Mammary epithelial cell (primary cell): ENCODE measurements at regions of chr3 and their contacts with region 1.

Region 1: GRCh38 chr3:189786479-189787064 is 155.4 kb downstream of the TP63 start:
- DNase-seq: no peak
- H3K4me3 ChIP-seq: no peak overlapping the region
- H3K27ac ChIP-seq: no peak overlapping the region
- H3K4me1 ChIP-seq: peaks cover 12% of the 10 kb centered on the region
- H3K27me3 ChIP-seq: no peaks in the 10 kb centered on the region
- CTCF ChIP-seq: peak in 1 of 2 donors; percentile 32

Region 2: GRCh38 chr3:189355481-189356201 is 430.9 kb before region 1 on chr3:
- CTCF ChIA-PET with region 1: no interaction called
- dilution Hi-C with region 1: no loop called
- in situ Hi-C with region 1: no loop called
- intact Hi-C with region 1: loop called (anchors 5 kb)
- DNase-seq: peak; percentile 91
- H3K4me3 ChIP-seq: no peak overlapping the region
- H3K27ac ChIP-seq: peak overlapping the region; percentile 88
- H3K4me1 ChIP-seq: peaks cover 36% of the 10 kb centered on the region
- H3K27me3 ChIP-seq: no peaks in the 10 kb centered on the region
- CTCF ChIP-seq: no peak

Region 3: GRCh38 chr3:189588070-189588820 is 198.3 kb before region 1 on chr3:
- CTCF ChIA-PET with region 1: no interaction called
- dilution Hi-C with region 1: no loop called
- in situ Hi-C with region 1: no loop called
- intact Hi-C with region 1: loop called (anchors 5 kb)
- DNase-seq: peak; percentile 90
- H3K4me3 ChIP-seq: peak overlapping the region; percentile 9 to 24 (median 9)
- H3K27ac ChIP-seq: peak overlapping the region; percentile 92
- H3K4me1 ChIP-seq: peaks cover 46% of the 10 kb centered on the region
- H3K27me3 ChIP-seq: no peaks in the 10 kb centered on the region
- CTCF ChIP-seq: no peak

Region 4: GRCh38 chr3:189710620-189711402 is 75.8 kb before region 1 on chr3:
- CTCF ChIA-PET with region 1: no interaction called
- dilution Hi-C with region 1: no loop called
- in situ Hi-C with region 1: no loop called
- intact Hi-C with region 1: loop called (anchors 5 kb)
- DNase-seq: peak; percentile 96
- H3K4me3 ChIP-seq: no peak overlapping the region
- H3K27ac ChIP-seq: peak overlapping the region; percentile 82
- H3K4me1 ChIP-seq: peaks cover 14% of the 10 kb centered on the region
- H3K27me3 ChIP-seq: no peaks in the 10 kb centered on the region
- CTCF ChIP-seq: no peak

Region 5: GRCh38 chr3:189727898-189728297 is 58.7 kb before region 1 on chr3:
- CTCF ChIA-PET with region 1: no interaction called
- dilution Hi-C with region 1: no loop called
- in situ Hi-C with region 1: no loop called
- intact Hi-C with region 1: loop called (anchors 5 kb)
- DNase-seq: no peak
- H3K4me3 ChIP-seq: no peak overlapping the region
- H3K27ac ChIP-seq: no peak overlapping the region
- H3K4me1 ChIP-seq: peaks cover 12% of the 10 kb centered on the region
- H3K27me3 ChIP-seq: no peaks in the 10 kb centered on the region
- CTCF ChIP-seq: no peak

Region 6: DNA sequence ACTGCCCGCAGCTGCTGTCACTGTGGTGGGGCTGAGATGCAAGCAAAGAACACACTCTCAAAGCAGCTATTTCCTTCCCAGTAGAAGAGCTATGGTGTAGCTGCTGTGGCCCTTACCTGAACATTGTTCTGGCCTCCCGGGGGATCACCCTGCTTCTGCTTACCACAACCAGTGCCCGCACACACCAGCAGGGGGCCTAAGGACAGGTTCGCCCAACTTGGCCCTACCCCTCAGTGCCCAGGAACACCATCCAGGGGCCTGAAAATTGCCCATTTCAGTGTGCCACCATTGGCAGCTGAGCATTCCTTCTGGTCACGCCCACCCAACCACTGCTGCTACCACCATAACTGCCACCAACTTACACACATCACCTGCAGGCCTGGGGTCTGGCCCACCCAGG is 42.3 kb before region 1 on chr3:
- CTCF ChIA-PET with region 1: no interaction called
- dilution Hi-C with region 1: no loop called
- in situ Hi-C with region 1: no loop called
- intact Hi-C with region 1: no loop called
- DNase-seq: no peak
- H3K4me3 ChIP-seq: no peak overlapping the region
- H3K27ac ChIP-seq: no peak overlapping the region
- H3K4me1 ChIP-seq: no peaks in the 10 kb centered on the region
- H3K27me3 ChIP-seq: no peaks in the 10 kb centered on the region
- CTCF ChIP-seq: no peak